Mammary epithelial cell (primary cell): ENCODE measurements at regions of chr6 and their contacts with region 1.

Region 1: DNA sequence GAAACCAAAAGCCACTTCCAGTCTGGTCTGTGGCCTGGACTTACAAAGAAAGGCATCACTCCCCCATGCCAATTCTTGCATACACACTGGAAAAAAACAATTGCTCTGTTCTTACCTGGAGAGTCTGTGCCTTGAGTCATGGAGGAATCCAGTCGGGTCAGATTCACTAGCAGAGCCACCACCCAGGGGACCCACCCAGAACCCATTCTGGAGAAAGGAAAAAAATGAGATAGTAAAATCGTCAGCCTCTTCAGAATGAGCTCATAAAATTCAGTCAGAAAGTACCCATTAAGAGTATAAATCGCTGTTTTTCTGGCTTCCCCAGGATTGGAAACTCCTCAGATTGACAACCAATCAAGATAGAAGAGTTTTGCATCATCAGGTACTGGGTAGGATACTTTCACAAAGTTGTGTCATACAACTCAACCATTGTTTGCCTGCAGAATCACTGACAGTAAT is at the start of gene HLA-DOB:
- DNase-seq: peak; percentile 92
- H3K4me3 ChIP-seq: peak within 1 kb of the TSS; percentile 1 to 15 (median 2)
- H3K27ac ChIP-seq: peak within 1 kb of the TSS; percentile 78
- H3K4me1 ChIP-seq: peaks cover 57% of the 10 kb centered on the region
- H3K27me3 ChIP-seq: no peaks in the 10 kb centered on the region
- CTCF ChIP-seq: no peak
- total RNA-seq, gene HLA-DOB: 5.5 to 8.3 TPM

Region 2: DNA sequence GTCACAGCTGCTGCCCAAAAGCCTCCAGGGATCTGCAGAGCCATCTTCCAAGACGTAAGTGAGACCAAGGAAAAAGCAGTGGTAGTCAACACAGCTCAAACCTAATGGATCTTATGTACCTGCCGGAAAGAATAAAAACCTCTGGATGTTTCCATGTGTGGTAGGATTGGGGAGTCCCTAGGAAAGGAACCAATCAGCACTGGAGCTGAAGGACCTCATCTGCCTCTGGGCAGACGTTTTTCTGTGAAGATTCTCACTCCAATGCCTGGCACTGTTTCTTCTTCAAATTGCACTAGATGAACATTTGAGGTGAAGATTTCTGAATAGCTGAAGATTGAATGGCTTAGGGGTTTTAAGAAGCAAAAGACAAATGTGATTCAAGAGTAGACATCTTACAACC is 53.3 kb before region 1 on chr6 and contains the start of gene HLA-DQB2:
- CTCF ChIA-PET with region 1: no interaction called
- dilution Hi-C with region 1: loop called (anchors 5 kb)
- in situ Hi-C with region 1: no loop called
- intact Hi-C with region 1: no loop called
- DNase-seq: no peak
- H3K4me3 ChIP-seq: no peak within 1 kb of the TSS
- H3K27ac ChIP-seq: no peak within 1 kb of the TSS
- H3K4me1 ChIP-seq: no peaks in the 10 kb centered on the region
- H3K27me3 ChIP-seq: peaks cover 14% of the 10 kb centered on the region
- CTCF ChIP-seq: no peak
- total RNA-seq, gene HLA-DQB2: 0.50 TPM in 1 of 2 donors, not detected in the other

Region 3: DNA sequence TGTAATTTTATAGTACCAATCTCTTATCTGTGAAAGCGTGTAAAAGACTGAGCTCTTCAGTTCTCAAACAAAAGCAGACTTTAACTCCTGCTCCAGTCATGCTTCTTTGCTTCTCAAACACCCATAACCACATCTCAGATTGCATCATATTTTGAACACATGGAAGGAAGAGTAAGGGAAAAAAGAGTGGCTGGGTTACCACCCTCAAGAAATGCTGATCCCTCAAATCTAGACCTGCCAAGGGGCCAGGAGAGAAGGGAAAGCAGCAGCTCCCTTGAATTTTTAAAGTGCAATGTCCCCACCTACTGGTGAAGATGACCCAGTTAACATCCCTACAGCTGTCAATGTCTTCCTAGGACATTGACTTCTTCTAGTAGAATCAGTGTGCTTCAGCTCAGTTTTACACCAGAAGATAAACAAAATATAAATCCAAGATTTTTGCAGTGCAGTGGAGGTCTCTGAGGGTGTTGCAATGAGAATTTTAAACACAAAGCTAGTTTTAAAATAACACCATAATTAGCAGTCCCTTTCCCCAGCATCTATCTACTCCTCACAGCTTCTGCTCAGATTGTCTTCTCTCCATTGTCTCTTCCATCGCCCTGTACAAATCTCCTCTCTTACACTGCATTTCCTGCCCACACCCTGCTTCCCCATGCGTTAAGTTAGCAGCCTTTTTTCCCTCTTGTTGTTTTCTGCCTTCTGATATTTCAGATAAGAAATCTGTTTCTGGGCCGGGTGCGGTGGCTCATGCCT is 30.8 kb before region 1 on chr6:
- CTCF ChIA-PET with region 1: no interaction called
- dilution Hi-C with region 1: no loop called
- in situ Hi-C with region 1: no loop called
- intact Hi-C with region 1: no loop called
- DNase-seq: peak; percentile 57
- H3K4me3 ChIP-seq: no peak overlapping the region
- H3K27ac ChIP-seq: no peak overlapping the region
- H3K4me1 ChIP-seq: peaks cover 7% of the 10 kb centered on the region
- H3K27me3 ChIP-seq: no peaks in the 10 kb centered on the region
- CTCF ChIP-seq: peak; percentile 61 to 73

Region 4: DNA sequence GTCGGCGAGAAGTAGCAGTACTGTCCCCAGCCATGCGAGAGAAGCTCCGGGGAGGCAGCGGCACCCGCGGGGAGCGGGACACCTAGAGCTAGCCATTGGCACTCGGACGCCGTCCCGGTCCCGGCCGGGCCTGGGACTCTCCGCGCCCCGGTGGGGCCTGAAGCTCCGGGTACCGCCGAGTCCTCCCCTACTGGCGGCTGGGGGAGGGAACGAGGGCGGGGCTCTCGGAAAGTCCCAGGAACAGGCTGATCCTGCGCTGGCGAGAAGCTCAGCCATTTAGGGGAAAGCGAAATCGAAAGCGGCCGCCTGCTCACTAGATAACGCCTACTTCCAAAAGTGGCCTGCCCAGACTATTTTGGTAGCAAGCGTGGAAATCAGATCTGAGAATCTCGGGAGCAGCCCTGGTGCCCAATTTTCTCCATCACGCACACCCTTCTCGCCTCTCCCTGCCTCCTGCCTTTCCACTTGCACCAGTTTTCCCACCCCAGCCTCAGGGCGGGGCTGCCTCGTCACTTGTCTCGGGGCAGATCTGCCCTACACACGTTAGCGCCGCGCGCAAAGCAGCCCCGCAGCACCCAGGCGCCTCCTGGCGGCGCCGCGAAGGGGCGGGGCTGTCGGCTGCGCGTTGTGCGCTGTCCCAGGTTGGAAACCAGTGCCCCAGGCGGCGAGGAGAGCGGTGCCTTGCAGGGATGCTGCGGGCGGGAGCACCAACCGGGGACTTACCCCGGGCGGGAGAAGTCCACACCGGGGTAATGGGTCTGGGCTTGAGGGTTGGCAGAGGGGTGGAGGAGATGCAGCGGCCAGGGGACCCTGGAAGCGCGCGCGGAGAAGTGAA is 37.0 kb after region 1 on chr6 and contains the starts of genes PSMB9 and TAP1:
- CTCF ChIA-PET with region 1: interaction called, 3 read pairs
- dilution Hi-C with region 1: loop called (anchors 5 kb)
- in situ Hi-C with region 1: no loop called
- intact Hi-C with region 1: no loop called
- DNase-seq: peak; percentile 93
- H3K4me3 ChIP-seq: peak within 1 kb of the TSS; percentile 62 to 94 (median 86)
- H3K27ac ChIP-seq: peak within 1 kb of the TSS; percentile 74
- H3K4me1 ChIP-seq: peaks cover 13% of the 10 kb centered on the region
- H3K27me3 ChIP-seq: no peaks in the 10 kb centered on the region
- CTCF ChIP-seq: peak; percentile 49 to 82
- total RNA-seq, gene PSMB9: 2.7 to 10.1 TPM
- total RNA-seq, gene TAP1: 49.2 to 50.1 TPM

Region 5: GRCh38 chr6:32885698-32886286 is 69.0 kb after region 1 on chr6:
- CTCF ChIA-PET with region 1: no interaction called
- dilution Hi-C with region 1: no loop called
- in situ Hi-C with region 1: no loop called
- intact Hi-C with region 1: no loop called
- DNase-seq: peak; percentile 45
- H3K4me3 ChIP-seq: no peak overlapping the region
- H3K27ac ChIP-seq: no peak overlapping the region
- H3K4me1 ChIP-seq: peaks cover 13% of the 10 kb centered on the region
- H3K27me3 ChIP-seq: no peaks in the 10 kb centered on the region
- CTCF ChIP-seq: peak; percentile 29 to 55